ENCODE measurements at regions of chr1 and their contacts with region 1.

Region 1: DNA sequence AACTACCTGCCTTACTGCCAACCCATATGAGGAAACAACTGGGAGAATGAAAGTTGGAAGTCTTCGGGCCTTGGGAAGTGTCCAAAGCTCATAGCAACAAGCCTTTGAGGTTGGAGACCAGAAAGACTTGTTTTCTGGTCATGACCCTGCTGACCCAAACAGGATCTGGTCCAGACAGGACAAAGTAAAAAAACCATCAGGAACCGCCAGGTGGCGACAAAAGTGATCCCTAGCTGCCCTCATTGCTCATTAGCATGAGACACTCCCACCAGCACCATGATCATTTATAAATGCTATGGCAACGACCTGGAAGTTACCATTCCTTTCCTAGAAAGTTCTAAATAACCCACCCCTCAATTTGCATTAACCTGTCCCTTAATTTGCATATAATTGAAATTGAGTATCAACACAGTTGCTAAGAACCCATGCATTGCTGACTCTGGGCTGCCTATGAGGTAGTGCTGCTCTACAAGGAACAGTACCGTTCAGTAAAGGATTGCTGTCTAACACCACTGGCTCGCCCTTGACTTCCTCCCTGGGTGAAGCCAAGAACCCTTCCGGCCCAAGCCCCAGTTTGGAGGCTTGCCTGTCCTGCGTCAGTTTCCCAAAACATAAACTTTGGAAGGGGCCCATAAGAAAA is 89.0 kb downstream of the URB2 start:
- DNase-seq: peak; percentile 83
- H3K4me3 Mint-ChIP-seq: no peak overlapping the region
- H3K27ac Mint-ChIP-seq: peak overlapping the region; percentile 17
- H3K4me1 Mint-ChIP-seq: no peaks in the 10 kb centered on the region
- H3K27me3 Mint-ChIP-seq: no peaks in the 10 kb centered on the region
- CTCF ChIP-seq: peak; percentile 88

Region 2: DNA sequence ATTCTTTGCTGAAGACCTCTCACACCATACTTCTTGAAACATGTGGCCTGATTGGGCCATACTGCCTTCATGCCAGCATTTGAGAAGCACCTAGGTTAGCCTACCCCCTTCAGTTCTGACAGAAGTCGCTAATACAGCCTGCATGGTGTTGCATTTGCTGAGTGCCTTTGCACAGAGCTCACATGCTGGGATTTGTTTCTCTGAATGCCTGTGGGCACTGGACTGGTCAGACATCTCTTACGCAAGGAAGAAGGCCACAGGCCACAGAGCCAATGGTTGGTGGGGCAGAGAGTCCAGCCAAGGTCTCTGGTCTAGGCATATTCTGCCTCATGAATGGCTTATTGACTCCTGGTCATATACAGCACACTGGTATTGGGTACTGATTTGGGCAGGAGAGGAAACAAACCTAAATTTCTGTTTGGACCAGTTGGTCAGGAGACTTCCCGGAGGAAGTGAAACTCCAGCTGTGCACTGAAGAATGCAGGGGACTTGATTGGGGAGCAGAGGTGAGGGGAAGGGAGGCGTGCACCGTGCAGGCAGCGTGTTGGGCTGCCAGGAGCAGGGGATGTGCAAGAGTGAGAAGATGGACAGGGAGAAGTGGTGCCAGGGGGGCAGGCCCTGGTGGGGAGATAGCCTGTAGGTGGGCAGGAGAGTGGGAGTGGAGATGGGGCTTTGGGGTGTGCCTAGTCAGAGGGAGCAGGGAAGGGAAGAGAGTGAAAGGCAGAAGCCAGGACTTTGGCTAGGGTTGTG is 70.9 kb before region 1 on chr1:
- CTCF ChIA-PET with region 1: no interaction called
- POLR2A ChIA-PET with region 1: no interaction called
- intact Hi-C with region 1: no loop called
- DNase-seq: no peak
- H3K4me3 Mint-ChIP-seq: no peak overlapping the region
- H3K27ac Mint-ChIP-seq: no peak overlapping the region
- H3K4me1 Mint-ChIP-seq: no peaks in the 10 kb centered on the region
- H3K27me3 Mint-ChIP-seq: no peaks in the 10 kb centered on the region
- CTCF ChIP-seq: no peak

Region 3: DNA sequence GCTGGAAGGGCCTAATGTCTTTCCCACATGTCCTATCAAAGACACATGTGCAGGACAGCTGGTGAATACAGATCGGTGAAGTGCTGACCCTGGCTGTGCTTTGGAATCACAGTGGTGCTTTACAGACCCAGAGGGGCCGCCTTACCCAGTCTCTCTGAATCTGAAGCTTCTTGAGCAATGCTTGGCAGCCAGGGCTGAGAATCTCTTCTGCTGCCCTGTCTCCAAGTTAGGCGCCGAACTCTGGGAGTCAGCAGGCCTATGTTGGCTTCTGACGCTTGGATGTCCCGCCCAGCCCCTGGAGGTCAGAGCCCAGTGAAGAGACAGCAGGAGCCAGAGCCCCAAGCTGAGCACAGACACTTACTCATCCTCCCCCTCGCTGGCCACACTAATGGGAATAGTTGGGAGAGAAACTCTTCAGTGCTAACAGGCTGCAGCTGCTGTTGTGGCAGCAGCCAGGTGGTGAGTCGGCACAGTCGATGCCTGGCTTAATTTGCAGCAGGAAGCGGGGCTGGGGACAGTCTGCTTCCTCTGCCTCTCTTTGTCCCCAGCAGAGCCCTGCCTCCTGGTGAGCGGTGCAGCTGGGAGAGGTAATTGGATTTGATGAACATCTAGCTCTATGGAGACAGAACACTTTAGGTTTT is 20.9 kb before region 1 on chr1:
- CTCF ChIA-PET with region 1: interaction called, 11 read pairs
- POLR2A ChIA-PET with region 1: interaction called, 6 read pairs
- intact Hi-C with region 1: no loop called
- DNase-seq: peak; percentile 30
- H3K4me3 Mint-ChIP-seq: no peak overlapping the region
- H3K27ac Mint-ChIP-seq: no peak overlapping the region
- H3K4me1 Mint-ChIP-seq: no peaks in the 10 kb centered on the region
- H3K27me3 Mint-ChIP-seq: no peaks in the 10 kb centered on the region
- CTCF ChIP-seq: no peak

Region 4: DNA sequence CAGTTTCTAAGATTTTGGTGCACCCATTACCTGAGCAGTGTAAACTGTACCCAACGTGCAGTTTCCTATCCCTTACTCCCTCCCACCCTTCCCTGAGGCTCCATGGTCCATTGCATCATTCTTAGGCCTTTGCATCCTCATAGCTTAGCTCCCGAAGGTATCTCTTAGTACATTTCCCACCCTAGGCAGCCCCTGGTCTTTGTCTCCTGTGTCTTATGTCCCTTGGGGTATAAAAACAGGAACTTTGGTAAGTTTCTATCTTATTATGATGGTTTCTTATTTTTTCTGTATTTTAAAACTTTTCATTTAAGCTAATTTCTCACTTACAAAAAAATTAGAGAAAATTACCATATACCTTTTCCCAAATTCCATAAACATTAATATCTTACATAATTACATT is 10.9 kb before region 1 on chr1:
- CTCF ChIA-PET with region 1: interaction called, 18 read pairs
- POLR2A ChIA-PET with region 1: interaction called, 4 read pairs
- intact Hi-C with region 1: no loop called
- DNase-seq: no peak
- H3K4me3 Mint-ChIP-seq: no peak overlapping the region
- H3K27ac Mint-ChIP-seq: no peak overlapping the region
- H3K4me1 Mint-ChIP-seq: peaks cover 7% of the 10 kb centered on the region
- H3K27me3 Mint-ChIP-seq: no peaks in the 10 kb centered on the region
- CTCF ChIP-seq: no peak

Region 5: DNA sequence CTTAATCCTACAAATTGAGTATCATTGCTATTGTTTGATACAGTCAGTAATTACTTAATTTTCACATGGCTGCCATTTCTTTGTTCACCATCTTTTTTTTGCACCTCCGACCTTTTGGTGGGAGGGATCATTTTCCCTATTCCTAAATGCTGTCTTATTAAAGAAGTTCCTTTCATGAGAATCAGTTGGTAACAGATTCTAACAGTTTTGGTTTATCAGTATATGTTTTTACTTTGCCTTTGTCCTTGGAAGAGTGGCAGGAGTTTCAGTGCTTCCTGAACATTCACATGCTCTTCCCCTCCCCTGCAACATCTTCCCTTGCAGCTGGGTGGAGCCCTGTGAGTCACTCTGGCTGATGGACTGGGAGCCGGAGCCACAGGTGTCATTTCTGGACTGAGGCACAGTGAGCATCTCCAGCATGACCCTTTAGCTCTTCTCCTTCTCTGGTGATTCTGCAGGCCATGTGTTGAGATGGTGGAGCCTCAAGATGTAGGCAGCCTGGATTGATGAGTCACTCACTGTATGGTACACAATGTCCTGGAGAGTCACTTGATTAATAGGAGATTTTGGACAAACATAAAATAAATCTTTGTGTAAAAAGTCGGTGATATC is 128.6 kb after region 1 on chr1:
- CTCF ChIA-PET with region 1: interaction called, 3 read pairs
- POLR2A ChIA-PET with region 1: no interaction called
- intact Hi-C with region 1: loop called (anchors 5 kb)
- DNase-seq: peak; percentile 91
- H3K4me3 Mint-ChIP-seq: peak overlapping the region; percentile 5
- H3K27ac Mint-ChIP-seq: peak overlapping the region; percentile 58
- H3K4me1 Mint-ChIP-seq: peaks cover 37% of the 10 kb centered on the region
- H3K27me3 Mint-ChIP-seq: no peaks in the 10 kb centered on the region
- CTCF ChIP-seq: no peak

Region 6: GRCh38 chr1:230167419-230167852 is 452.4 kb after region 1 on chr1:
- CTCF ChIA-PET with region 1: interaction called, 4 read pairs
- POLR2A ChIA-PET with region 1: no interaction called
- intact Hi-C with region 1: loop called (anchors 1 kb)
- DNase-seq: peak; percentile 77
- H3K4me3 Mint-ChIP-seq: no peak overlapping the region
- H3K27ac Mint-ChIP-seq: no peak overlapping the region
- H3K4me1 Mint-ChIP-seq: peaks cover 29% of the 10 kb centered on the region
- H3K27me3 Mint-ChIP-seq: no peaks in the 10 kb centered on the region
- CTCF ChIP-seq: peak; percentile 89

Region 7: DNA sequence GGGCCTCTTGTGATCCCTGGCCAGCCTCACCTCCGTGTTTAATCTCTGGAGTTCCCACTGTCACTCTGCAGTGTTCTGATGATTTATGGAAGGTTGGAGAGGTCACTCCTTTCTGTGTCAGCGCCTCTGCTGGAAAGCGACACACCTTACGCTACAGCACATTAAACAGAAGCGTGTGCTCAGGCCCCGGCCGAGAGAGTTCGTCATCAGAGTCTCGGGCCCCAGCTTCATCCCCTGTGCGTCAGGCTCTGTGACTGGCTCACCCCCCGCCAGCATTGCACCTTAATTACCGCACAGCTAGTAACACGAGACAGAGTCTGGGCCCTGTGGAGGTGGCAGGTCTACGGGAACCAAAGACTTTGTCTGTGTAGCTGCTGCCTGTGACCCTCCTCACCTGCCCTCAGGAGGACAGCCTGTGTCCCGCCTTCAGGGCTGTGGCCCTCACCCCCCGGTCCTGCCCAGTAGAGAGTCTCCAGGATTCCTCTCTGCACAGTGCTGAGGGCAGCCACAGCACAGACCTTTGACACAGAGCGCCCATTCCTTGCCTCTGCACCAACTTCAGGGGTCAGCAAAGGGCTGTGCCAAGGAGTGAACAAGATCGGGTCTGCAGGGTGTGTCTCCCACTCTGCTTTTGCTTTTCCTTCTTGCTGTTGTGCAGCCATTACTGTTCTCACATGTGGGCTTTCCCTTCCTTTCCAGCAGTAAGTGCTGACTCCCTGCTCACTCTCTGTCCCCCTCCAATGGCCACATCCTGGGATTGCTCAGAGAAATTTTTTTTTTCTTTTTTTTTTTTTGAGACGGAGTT is 553.5 kb after region 1 on chr1:
- CTCF ChIA-PET with region 1: no interaction called
- POLR2A ChIA-PET with region 1: no interaction called
- intact Hi-C with region 1: loop called (anchors 1 kb)
- DNase-seq: peak; percentile 81
- H3K4me3 Mint-ChIP-seq: no peak overlapping the region
- H3K27ac Mint-ChIP-seq: no peak overlapping the region
- H3K4me1 Mint-ChIP-seq: no peaks in the 10 kb centered on the region
- H3K27me3 Mint-ChIP-seq: no peaks in the 10 kb centered on the region
- CTCF ChIP-seq: peak; percentile 87

Measured in MCF 10A (cell line).